ENCODE measurements at regions of chr3 and their contacts with region 1.

Region 1: GRCh38 chr3:158727206-158728060 is 4.8 kb downstream of the RARRES1 start:
- DNase-seq: no peak
- H3K4me3 ChIP-seq: peak overlapping the region in 1 of 2 donors; percentile 5
- H3K27ac ChIP-seq: peak overlapping the region; percentile 48
- H3K4me1 ChIP-seq: peaks cover 57% of the 10 kb centered on the region
- H3K27me3 ChIP-seq: no peaks in the 10 kb centered on the region
- CTCF ChIP-seq: peak; percentile 70 to 87 (median 86)
- POLR2A ChIP-seq: no peak

Region 2: DNA sequence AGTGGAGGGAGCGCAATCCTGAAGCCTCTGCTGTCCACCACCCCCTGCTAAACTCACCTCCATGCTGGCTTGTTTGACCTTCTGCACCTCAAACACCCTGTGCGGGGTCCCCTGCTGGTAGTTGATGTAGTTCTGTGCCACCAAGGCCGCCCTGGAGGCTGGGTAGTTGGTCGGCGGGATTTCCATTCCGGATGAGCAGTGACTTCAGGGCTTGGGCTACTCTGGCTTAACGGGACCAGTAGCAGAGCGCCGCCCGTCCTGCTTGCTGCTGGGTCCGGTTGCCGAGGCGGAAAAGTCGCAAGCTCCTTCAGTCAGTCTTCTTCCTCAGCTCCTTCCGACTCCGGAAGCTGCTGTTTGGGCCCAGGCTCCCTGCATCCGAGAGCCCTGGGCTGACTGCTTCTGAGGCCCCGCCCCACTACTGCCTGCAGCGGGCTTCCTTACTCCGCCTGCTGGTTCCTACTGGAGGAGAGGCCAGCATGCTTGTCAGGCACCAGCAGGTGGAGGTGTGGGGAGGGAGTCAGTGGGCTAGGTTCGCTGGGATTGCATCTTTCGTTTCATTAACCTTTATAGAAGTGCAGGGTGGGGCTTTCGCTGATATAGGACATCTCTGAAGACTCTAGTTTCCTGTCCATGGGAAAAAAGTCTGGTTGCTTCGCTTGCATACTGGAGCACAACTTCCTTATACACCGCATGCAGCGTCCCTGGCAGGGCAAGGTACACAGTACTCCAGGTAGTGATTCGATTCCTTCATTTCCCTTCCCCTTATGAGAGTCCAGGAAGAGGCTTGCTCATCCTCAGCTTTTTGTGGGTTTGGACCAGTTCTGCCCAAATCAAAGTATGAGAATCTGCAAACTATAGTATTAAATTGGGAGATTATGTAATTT is 54.9 kb before region 1 on chr3 and contains the start of gene LXN:
- intact Hi-C with region 1: loop called (anchors 10 kb)
- DNase-seq: peak in 1 of 2 donors; percentile 93
- H3K4me3 ChIP-seq: peak within 1 kb of the TSS; percentile 52 to 54
- H3K27ac ChIP-seq: peak within 1 kb of the TSS; percentile 78
- H3K4me1 ChIP-seq: peaks cover 14% of the 10 kb centered on the region
- H3K27me3 ChIP-seq: no peaks in the 10 kb centered on the region
- CTCF ChIP-seq: peak in 2 of 3 experiments; percentile 48 to 64
- POLR2A ChIP-seq: no peak
- total RNA-seq, gene LXN: 22.6 TPM

Region 3: GRCh38 chr3:158785972-158786371 is 58.5 kb after region 1 on chr3:
- intact Hi-C with region 1: loop called (anchors 2 kb)
- DNase-seq: no peak
- H3K4me3 ChIP-seq: no peak overlapping the region
- H3K27ac ChIP-seq: no peak overlapping the region
- H3K4me1 ChIP-seq: peaks cover 1% of the 10 kb centered on the region
- H3K27me3 ChIP-seq: no peaks in the 10 kb centered on the region
- CTCF ChIP-seq: no peak
- POLR2A ChIP-seq: no peak

Measured in vagina (tissue), 2 donors.